ENCODE measurements at regions of chr15 and their contacts with region 1.

Region 1: DNA sequence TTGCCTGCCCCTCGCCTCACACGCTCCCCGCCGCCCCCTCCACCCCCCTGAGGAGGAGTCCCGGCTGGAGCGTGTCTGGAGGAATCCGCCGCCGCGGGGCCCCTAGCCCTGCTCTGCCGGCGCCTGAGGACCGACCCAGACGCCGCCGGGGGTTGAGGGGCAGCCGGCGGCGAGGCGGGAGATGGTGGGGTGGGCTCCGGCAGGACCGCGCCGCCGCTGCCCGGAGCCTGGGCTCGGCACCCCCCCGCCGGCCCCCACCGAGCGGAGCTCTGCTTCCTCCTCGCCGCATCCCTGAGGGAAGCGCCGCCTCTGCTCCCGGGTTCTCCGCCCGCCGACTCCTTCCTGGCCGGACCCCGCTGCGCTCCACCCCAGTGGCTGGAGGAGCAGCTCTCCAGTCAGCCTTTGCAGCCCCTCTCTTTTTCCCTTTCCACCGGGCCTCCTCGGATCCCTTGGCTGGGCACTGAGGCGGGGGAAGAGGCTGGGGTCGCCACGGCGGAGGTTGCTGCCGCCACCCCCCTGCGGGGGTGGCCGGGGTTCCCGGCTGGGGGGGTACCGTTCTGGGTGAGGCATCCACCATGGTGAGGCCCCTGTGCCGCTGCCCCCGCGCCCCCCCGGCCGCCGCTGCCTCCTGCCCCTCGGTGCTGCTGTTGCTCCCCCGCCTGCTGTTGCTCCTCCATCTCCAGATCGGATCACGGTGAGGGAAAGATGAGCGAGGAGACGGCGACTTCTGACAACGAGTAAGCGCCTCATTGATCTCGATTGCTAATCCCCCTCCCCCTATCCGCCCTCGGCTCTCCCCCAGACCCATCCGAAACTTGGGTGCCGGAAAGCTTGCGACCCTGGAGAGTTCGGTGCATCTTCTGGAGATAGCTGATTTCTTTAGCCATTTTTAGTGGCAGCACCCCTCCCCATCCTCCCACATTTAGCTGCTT is at the start of gene SPRED1:
- DNase-seq: peak; percentile 69 to 73
- H3K4me3 ChIP-seq: peak within 1 kb of the TSS; percentile 89 to 90
- H3K27ac ChIP-seq: peak within 1 kb of the TSS; percentile 96 to 100
- H3K4me1 ChIP-seq: no peaks in the 10 kb centered on the region
- H3K27me3 ChIP-seq: no peaks in the 10 kb centered on the region
- CTCF ChIP-seq: peak in 1 of 4 experiments; percentile 2
- POLR2A ChIP-seq: no peak
- total RNA-seq, gene SPRED1: 6.1 to 135 (median 26.6) TPM

Region 2: GRCh38 chr15:38129531-38130204 is 123.1 kb before region 1 on chr15:
- intact Hi-C with region 1: loop called (anchors 5 kb)
- DNase-seq: peak; percentile 91 to 96
- H3K4me3 ChIP-seq: peak overlapping the region; percentile 1 to 21
- H3K27ac ChIP-seq: peak overlapping the region; percentile 73 to 90
- H3K4me1 ChIP-seq: peaks cover 0 to 16% of the 10 kb centered on the region in 2 donors
- H3K27me3 ChIP-seq: no peaks in the 10 kb centered on the region
- CTCF ChIP-seq: no peak
- POLR2A ChIP-seq: no peak

Region 3: GRCh38 chr15:38297623-38298388 is 45.1 kb after region 1 on chr15:
- intact Hi-C with region 1: no loop called
- DNase-seq: no peak
- H3K4me3 ChIP-seq: no peak overlapping the region
- H3K27ac ChIP-seq: no peak overlapping the region
- H3K4me1 ChIP-seq: no peaks in the 10 kb centered on the region
- H3K27me3 ChIP-seq: no peaks in the 10 kb centered on the region
- CTCF ChIP-seq: no peak
- POLR2A ChIP-seq: no peak

Region 4: DNA sequence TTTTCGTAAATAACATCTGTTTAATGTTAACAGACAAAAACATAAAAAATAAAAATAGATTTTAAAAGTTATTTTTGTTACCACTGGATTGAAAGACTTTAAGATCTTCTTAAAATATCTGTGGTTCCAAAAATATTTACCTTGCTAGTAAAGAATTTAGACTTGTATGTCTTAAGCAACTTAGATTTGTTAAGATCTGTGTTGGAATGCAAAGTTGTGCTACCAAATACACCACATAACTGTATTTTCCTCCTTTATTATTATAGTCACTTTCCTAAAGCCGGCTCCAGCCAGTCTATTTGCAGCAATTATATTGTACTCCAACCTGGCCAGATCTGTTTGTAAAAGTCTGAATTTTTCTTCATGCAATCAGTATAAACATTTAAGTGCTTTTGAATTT is 63.6 kb after region 1 on chr15:
- intact Hi-C with region 1: no loop called
- DNase-seq: no peak
- H3K4me3 ChIP-seq: no peak overlapping the region
- H3K27ac ChIP-seq: no peak overlapping the region
- H3K4me1 ChIP-seq: no peaks in the 10 kb centered on the region
- H3K27me3 ChIP-seq: no peaks in the 10 kb centered on the region
- CTCF ChIP-seq: no peak
- POLR2A ChIP-seq: no peak

Region 5: DNA sequence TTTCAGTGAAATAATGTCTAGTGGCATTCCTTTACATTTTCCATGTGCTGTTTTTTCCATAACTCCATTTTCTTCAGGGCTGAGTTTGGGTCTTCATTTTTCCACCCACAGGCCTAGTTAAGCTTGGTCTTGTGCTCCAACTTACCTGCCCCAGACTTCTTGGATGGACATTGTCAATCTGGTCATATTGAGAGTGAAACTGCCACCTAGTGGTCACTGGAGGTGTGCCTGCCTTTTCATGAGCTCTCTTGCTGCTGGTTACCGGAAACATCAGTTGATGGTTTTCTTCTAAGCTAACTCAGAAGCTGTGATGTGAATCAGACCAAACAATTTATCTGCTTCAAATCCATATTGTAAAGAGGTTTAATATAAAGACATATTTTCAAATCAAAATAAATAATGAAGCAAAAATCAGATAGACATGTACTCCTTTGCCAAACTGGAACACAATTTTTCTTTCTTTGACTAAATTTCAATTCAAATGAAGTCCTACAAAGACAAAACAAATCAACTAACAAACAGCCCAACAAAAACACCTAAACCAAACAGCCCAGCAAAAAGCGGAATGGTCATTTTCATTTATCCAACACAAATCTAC is 447.0 kb after region 1 on chr15:
- intact Hi-C with region 1: no loop called
- DNase-seq: peak; percentile 27 to 36
- H3K4me3 ChIP-seq: no peak overlapping the region
- H3K27ac ChIP-seq: no peak overlapping the region
- H3K4me1 ChIP-seq: no peaks in the 10 kb centered on the region
- H3K27me3 ChIP-seq: no peaks in the 10 kb centered on the region
- CTCF ChIP-seq: peak; percentile 33 to 51 (median 48)
- POLR2A ChIP-seq: no peak

Measured in uterus (tissue), 4 donors.